ENCODE measurements at regions of chr3 and their contacts with region 1.

Region 1: GRCh38 chr3:188362405-188362831 is 208.5 kb downstream of the LPP start:
- DNase-seq: no peak
- ATAC-seq: peak; percentile 63
- H3K4me3 Mint-ChIP-seq: peak overlapping the region; percentile 24
- H3K27ac Mint-ChIP-seq: peak overlapping the region; percentile 80
- H3K4me1 Mint-ChIP-seq: peaks cover 78% of the 10 kb centered on the region
- H3K27me3 Mint-ChIP-seq: no peaks in the 10 kb centered on the region
- CTCF ChIP-seq: no peak

Region 2: DNA sequence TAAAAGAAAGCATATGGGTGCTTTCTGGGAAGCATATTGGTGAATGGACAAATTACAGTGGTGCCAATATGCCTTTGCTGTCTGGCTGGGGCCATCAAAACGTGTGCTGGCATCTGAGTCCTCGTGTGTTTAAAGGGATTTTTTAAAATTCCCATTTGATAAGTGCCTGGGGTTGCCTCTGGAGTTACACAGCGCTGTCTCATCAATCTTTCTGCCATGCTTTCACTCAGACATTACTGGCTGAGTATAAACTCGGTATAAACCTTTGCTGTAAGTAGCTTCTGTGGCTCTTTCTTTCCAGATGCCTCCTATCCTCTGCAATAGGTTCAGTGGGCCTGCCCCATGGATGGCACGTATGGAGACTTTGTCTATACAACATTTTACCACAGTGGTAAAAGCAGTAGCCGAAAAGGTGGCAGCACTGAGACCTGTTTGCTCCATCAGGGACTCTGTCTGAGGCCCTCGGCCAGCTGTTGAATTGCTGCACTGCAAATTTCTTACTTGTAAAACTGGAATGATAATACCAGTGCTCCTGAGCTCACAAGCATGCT is 13.0 kb before region 1 on chr3:
- CTCF ChIA-PET with region 1: interaction called, 6 read pairs
- POLR2A ChIA-PET with region 1: interaction called, 10 read pairs
- intact Hi-C with region 1: loop called (anchors 1 kb)
- DNase-seq: no peak
- ATAC-seq: no peak
- H3K4me3 Mint-ChIP-seq: no peak overlapping the region
- H3K27ac Mint-ChIP-seq: no peak overlapping the region
- H3K4me1 Mint-ChIP-seq: peaks cover 67% of the 10 kb centered on the region
- H3K27me3 Mint-ChIP-seq: no peaks in the 10 kb centered on the region
- CTCF ChIP-seq: no peak

Region 3: GRCh38 chr3:188380722-188381121 is 18.3 kb after region 1 on chr3:
- CTCF ChIA-PET with region 1: no interaction called
- POLR2A ChIA-PET with region 1: no interaction called
- intact Hi-C with region 1: loop called (anchors 2 kb)
- DNase-seq: no peak
- ATAC-seq: no peak
- H3K4me3 Mint-ChIP-seq: no peak overlapping the region
- H3K27ac Mint-ChIP-seq: peak overlapping the region; percentile 39
- H3K4me1 Mint-ChIP-seq: peaks cover 46% of the 10 kb centered on the region
- H3K27me3 Mint-ChIP-seq: no peaks in the 10 kb centered on the region
- CTCF ChIP-seq: no peak

Measured in activated B cell treated with CpG ODN at 0.5 μM for 24 hours (primary cell).